Tibial artery (tissue), 4 donors: ENCODE measurements at regions of chr11 and their contacts with region 1.

Region 1: GRCh38 chr11:39149214-39149613 is 2310.2 kb downstream of the LRRC4C start:
- DNase-seq: no peak
- H3K4me3 ChIP-seq: no peak overlapping the region
- H3K27ac ChIP-seq: no peak overlapping the region
- H3K4me1 ChIP-seq: no peaks in the 10 kb centered on the region
- H3K27me3 ChIP-seq: no peaks in the 10 kb centered on the region
- CTCF ChIP-seq: no peak

Region 2: GRCh38 chr11:39209981-39210380 is 60.8 kb after region 1 on chr11:
- intact Hi-C with region 1: loop called (anchors 2 kb)
- DNase-seq: no peak
- H3K4me3 ChIP-seq: no peak overlapping the region
- H3K27ac ChIP-seq: no peak overlapping the region
- H3K4me1 ChIP-seq: no peaks in the 10 kb centered on the region
- H3K27me3 ChIP-seq: no peaks in the 10 kb centered on the region
- CTCF ChIP-seq: no peak

Region 3: GRCh38 chr11:39327302-39327701 is 178.1 kb after region 1 on chr11:
- intact Hi-C with region 1: no loop called
- DNase-seq: no peak
- H3K4me3 ChIP-seq: no peak overlapping the region
- H3K27ac ChIP-seq: no peak overlapping the region
- H3K4me1 ChIP-seq: no peaks in the 10 kb centered on the region
- H3K27me3 ChIP-seq: no peaks in the 10 kb centered on the region
- CTCF ChIP-seq: no peak